ENCODE measurements at regions of chr12 and their contacts with region 1.

Region 1: DNA sequence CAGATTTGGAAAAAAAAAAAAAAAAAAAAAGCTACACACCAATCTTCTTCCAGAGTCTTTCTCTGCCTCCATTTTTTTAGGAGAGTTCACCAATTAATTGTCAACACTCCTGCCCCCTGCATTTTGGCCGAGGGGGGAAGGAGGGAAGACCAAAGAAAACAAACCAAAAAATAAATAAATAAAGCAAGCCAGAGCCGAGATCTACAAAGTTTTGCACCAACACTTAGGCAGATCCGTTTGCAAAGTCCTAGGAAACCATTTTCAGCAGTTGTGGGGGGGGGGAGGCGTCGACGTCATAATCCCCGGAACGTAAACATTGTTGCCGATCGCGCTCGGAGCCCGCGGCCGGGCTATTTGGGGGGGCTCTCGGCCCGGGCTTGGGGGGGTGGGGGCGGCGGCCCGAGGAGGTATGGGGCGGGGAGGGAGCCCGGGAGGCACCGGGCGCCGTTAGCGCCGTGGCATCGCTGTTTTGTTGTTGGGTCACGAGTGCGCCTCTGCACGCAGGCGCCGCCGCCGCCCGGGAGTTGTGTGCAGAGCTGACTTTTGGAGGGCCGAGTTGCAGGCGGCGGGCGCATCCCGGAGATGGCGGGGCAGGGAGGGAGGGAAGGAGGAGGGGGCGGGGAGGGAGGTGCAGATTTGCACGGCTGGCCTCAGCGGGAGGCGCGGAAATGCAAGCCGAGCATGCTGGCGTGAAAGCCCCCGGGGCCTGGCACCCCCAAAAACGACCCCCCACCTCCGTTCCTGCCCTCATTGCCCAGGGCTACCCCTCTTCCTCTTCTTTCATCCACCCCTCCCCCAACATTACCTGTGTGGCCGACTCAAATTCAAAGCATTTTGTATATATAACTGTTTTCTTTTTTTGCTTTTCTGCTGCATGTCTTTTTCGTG is 598 bp downstream of the KDM2B start:
- DNase-seq: peak; percentile 54 to 83
- H3K4me3 ChIP-seq: peak overlapping the region; percentile 78 to 88 (median 84)
- H3K27ac ChIP-seq: peak overlapping the region; percentile 95
- H3K4me1 ChIP-seq: peaks cover 10 to 30% (median 22%) of the 10 kb centered on the region in 4 experiments
- H3K27me3 ChIP-seq: no peaks in the 10 kb centered on the region
- CTCF ChIP-seq: no peak
- EP300 ChIP-seq: no peak
- POLR2A ChIP-seq: peak in 1 of 2 experiments; percentile 66; a peak in 2 of 3 replicates
- RAD21 ChIP-seq: 0 out of 4 replicates have a peak, but pooled peaks of 1 of the 2 experiments have one; percentile 1

Region 2: DNA sequence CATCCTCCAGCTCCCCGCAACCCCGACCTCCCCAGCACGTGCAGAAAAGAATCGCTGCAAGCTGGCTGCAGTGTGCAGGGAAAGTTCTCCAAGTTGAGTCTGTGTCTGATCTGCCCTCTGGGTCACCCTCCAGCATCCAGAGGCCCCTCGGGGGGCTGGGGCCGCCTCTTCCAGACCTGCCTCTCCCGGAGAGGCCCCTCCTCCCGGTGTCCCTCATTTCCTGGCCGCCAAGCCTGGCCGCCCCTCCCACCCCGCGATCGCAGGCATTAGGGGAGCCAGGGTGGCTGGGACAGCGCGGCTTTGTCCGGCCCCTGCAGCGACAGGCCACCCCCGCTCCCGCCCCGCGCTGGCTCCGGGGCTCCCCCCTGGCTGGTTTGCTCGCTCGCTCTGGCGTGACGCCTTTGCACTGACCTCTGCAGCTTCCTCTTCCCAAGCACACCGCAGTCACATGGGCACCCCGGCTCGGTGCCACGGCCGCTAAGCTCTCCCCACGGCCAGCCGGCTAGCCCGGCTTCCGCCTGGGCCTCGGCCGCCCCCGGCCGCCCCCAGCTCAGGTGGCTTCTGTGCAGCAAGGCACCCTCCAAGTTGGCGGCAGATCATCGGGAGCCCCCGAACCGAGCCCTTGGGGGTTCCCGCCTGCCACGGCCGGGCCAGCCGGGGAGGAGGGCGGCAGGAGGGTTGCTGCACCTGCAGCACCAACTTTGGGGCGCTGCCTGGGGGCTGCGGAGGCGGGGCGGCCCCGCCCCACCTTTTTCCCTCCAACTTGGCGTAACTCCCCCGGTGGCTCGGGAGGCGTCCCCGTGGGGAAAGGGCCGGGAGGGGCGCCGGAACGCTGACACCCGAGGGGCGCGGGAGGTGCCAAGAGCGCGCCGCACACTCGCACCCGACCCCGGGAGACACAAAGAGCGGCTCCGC is 43.1 kb before region 1 on chr12:
- CTCF ChIA-PET with region 1: interaction called, 4 read pairs
- POLR2A ChIA-PET with region 1: interaction called, 793 read pairs
- DNase-seq: peak in 1 of 2 experiments; percentile 78
- H3K4me3 ChIP-seq: peak overlapping the region; percentile 0 to 59 (median 45); a peak in 7 of 8 replicates
- H3K27ac ChIP-seq: no peak overlapping the region
- H3K4me1 ChIP-seq: peaks cover 7 to 32% (median 25%) of the 10 kb centered on the region in 4 experiments
- H3K27me3 ChIP-seq: peaks cover 0 to 9% (median 0%) of the 10 kb centered on the region in 4 experiments; a peak in 3 of 7 replicates
- CTCF ChIP-seq: no peak
- EP300 ChIP-seq: no peak
- POLR2A ChIP-seq: no peak
- RAD21 ChIP-seq: no peak

Region 3: GRCh38 chr12:121590476-121591143 is 10.4 kb after region 1 on chr12:
- CTCF ChIA-PET with region 1: interaction called, 4 read pairs
- POLR2A ChIA-PET with region 1: interaction called, 219 read pairs
- DNase-seq: peak in 1 of 2 experiments; percentile 49
- H3K4me3 ChIP-seq: peak overlapping the region in 2 of 4 experiments; percentile 12 to 38; a peak in 3 of 8 replicates
- H3K27ac ChIP-seq: peak overlapping the region; percentile 29; the same call in 1 of the 2 replicates
- H3K4me1 ChIP-seq: peaks cover 2 to 8% (median 8%) of the 10 kb centered on the region in 4 experiments; a peak in 4 of 7 replicates
- H3K27me3 ChIP-seq: no peaks in the 10 kb centered on the region
- CTCF ChIP-seq: no peak
- EP300 ChIP-seq: no peak
- POLR2A ChIP-seq: no peak
- RAD21 ChIP-seq: no peak

Region 4: GRCh38 chr12:121610239-121611149 is 30.3 kb after region 1 on chr12:
- CTCF ChIA-PET with region 1: interaction called, 9 read pairs
- POLR2A ChIA-PET with region 1: interaction called, 104 read pairs
- DNase-seq: no peak
- H3K4me3 ChIP-seq: no peak overlapping the region
- H3K27ac ChIP-seq: no peak overlapping the region
- H3K4me1 ChIP-seq: peaks cover 0 to 6% (median 1%) of the 10 kb centered on the region in 4 experiments; a peak in 2 of 7 replicates
- H3K27me3 ChIP-seq: no peaks in the 10 kb centered on the region
- CTCF ChIP-seq: no peak
- EP300 ChIP-seq: no peak
- POLR2A ChIP-seq: no peak
- RAD21 ChIP-seq: no peak

Region 5: DNA sequence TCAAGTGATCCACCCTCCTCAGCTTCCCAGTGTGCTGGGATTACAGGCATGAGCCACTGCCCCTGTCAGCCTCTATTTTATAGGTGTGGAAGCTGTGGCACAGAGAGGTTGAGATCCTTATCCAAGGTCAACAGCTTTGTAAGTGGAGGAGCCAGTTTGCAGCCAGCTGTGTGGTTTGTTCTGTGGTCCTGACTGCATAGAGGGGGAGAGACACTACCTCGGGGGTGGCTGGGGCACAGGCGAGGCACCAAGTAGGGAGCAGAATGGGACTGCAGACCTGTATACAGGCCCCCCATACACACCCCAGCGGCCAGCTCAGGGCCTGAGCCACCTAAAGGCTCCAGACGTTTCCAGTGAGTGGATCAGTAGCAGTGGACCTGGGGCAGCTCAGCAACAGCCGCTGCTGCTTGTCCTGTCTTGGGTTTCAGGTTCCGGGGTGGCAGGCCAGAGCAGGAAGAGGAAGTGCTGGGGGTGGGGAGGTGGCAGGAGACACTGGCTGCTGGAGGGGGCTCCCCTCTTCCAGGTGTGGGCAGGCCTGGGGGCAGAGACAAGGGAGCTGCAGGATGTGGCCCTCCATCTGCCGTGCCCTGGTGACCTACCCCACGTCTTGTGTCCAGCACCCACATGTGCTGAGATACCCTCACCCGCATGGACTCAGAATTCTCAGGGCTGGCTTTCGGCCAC is 57.1 kb after region 1 on chr12:
- CTCF ChIA-PET with region 1: interaction called, 4 read pairs
- POLR2A ChIA-PET with region 1: interaction called, 70 read pairs
- DNase-seq: no peak
- H3K4me3 ChIP-seq: no peak overlapping the region
- H3K27ac ChIP-seq: no peak overlapping the region
- H3K4me1 ChIP-seq: peaks cover 2 to 10% (median 8%) of the 10 kb centered on the region in 4 experiments; a peak in 6 of 7 replicates
- H3K27me3 ChIP-seq: no peaks in the 10 kb centered on the region
- CTCF ChIP-seq: no peak
- EP300 ChIP-seq: no peak
- POLR2A ChIP-seq: no peak
- RAD21 ChIP-seq: no peak

Measured in H1 (cell line).